MCF 10A (cell line): ENCODE measurements at regions of chr4 and their contacts with region 1.

Region 1: GRCh38 chr4:152500800-152501434 is 35.0 kb downstream of the FBXW7 start:
- DNase-seq: peak; percentile 83
- H3K4me3 Mint-ChIP-seq: no peak overlapping the region
- H3K27ac Mint-ChIP-seq: no peak overlapping the region
- H3K4me1 Mint-ChIP-seq: peaks cover 12% of the 10 kb centered on the region
- H3K27me3 Mint-ChIP-seq: no peaks in the 10 kb centered on the region
- CTCF ChIP-seq: peak; percentile 66

Region 2: DNA sequence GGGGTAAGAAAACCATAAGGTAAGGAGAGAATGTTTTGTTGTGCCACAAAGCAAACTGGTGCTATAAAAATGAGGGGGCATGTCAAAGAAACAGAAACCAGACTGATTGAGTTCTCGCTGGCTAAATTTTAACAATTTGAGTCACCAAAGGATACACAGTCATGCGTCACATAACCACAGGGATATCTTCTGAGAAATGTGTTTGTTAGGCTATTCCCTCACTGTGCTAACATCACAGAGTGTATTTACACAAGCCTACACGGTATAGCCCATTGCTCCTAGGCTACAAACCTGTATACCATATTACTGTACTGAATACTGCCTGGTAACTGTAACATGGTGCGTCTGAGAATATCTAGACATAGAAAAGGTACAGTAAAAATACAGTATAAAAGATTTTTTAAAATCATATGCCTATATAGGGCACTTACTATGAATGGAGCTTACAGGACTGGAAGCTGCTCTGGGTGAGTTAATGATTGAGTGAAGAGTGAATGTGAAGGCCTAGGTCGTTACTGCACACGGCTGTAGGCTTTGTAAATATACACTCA is 15.1 kb before region 1 on chr4:
- CTCF ChIA-PET with region 1: interaction called, 16 read pairs
- POLR2A ChIA-PET with region 1: interaction called, 4 read pairs
- intact Hi-C with region 1: no loop called
- DNase-seq: peak; percentile 78
- H3K4me3 Mint-ChIP-seq: peak overlapping the region; percentile 54
- H3K27ac Mint-ChIP-seq: peak overlapping the region; percentile 74
- H3K4me1 Mint-ChIP-seq: peaks cover 18% of the 10 kb centered on the region
- H3K27me3 Mint-ChIP-seq: no peaks in the 10 kb centered on the region
- CTCF ChIP-seq: no peak

Region 3: GRCh38 chr4:152535903-152536544 is 35.1 kb after region 1 on chr4 and contains the start of gene FBXW7:
- CTCF ChIA-PET with region 1: interaction called, 22 read pairs
- POLR2A ChIA-PET with region 1: interaction called, 69 read pairs
- intact Hi-C with region 1: loop called (anchors 1 kb)
- DNase-seq: peak; percentile 99
- H3K4me3 Mint-ChIP-seq: peak within 1 kb of the TSS; percentile 92
- H3K27ac Mint-ChIP-seq: peak within 1 kb of the TSS; percentile 95
- H3K4me1 Mint-ChIP-seq: peaks cover 49% of the 10 kb centered on the region
- H3K27me3 Mint-ChIP-seq: no peaks in the 10 kb centered on the region
- CTCF ChIP-seq: no peak
- total RNA-seq, gene FBXW7: 35.8 and 40.2 TPM in 2 replicates

Region 4: GRCh38 chr4:152634110-152634760 is 133.3 kb after region 1 on chr4:
- CTCF ChIA-PET with region 1: interaction called, 131 read pairs
- POLR2A ChIA-PET with region 1: interaction called, 15 read pairs
- intact Hi-C with region 1: no loop called
- DNase-seq: peak; percentile 51
- H3K4me3 Mint-ChIP-seq: no peak overlapping the region
- H3K27ac Mint-ChIP-seq: peak overlapping the region; percentile 74
- H3K4me1 Mint-ChIP-seq: no peaks in the 10 kb centered on the region
- H3K27me3 Mint-ChIP-seq: no peaks in the 10 kb centered on the region
- CTCF ChIP-seq: no peak

Region 5: DNA sequence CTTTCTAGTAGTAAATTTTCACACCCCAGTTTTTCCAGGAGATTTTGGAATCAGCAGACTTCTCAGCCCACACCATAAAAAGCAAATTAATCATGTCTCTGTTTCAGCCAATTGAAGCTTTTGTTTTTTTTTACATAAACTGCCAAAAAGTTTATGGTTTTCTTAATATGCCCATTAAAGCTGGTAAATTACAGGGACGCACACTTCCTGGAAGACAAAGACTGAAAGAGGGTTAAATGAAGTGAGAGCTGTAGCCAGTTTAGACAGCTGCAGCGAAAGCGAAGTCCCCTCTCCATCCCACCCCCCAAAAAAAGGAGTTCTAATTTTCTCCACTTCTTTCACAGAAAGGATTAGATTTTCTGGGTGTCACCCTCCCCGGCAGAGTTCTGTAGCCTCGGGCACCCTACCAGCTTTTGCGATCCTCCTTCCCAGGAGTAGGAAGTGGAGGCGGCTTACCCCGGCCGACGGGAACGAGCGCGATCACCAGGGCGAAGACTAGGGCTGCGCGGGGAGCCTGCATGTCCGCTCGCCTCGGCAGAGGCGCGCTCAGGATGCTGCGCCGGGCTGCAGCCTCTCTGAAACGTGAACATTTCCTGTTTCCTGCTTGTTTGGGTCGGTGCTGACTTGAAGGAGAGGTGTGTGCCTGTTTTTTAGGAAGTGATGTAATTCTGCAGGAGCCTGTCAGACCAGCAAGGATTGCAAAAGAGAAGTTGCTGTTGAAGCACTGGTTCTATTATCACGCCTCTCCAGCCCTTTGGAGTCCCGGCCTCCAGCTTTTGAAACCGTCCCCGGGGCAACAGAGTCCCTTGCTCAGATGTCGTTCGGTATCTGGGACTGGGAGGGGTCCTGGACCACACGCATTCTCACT is 178.7 kb after region 1 on chr4 and contains the start of gene TMEM154:
- CTCF ChIA-PET with region 1: interaction called, 15 read pairs
- POLR2A ChIA-PET with region 1: interaction called, 5 read pairs
- intact Hi-C with region 1: no loop called
- DNase-seq: peak; percentile 93
- H3K4me3 Mint-ChIP-seq: peak within 1 kb of the TSS; percentile 94
- H3K27ac Mint-ChIP-seq: peak within 1 kb of the TSS; percentile 91
- H3K4me1 Mint-ChIP-seq: peaks cover 22% of the 10 kb centered on the region
- H3K27me3 Mint-ChIP-seq: no peaks in the 10 kb centered on the region
- CTCF ChIP-seq: no peak
- total RNA-seq, gene TMEM154: 37.9 and 41.5 TPM in 2 replicates

Region 6: GRCh38 chr4:153564630-153565525 is 1064.0 kb after region 1 on chr4:
- CTCF ChIA-PET with region 1: no interaction called
- POLR2A ChIA-PET with region 1: no interaction called
- intact Hi-C with region 1: no loop called
- DNase-seq: peak; percentile 13
- H3K4me3 Mint-ChIP-seq: no peak overlapping the region
- H3K27ac Mint-ChIP-seq: no peak overlapping the region
- H3K4me1 Mint-ChIP-seq: peaks cover 7% of the 10 kb centered on the region
- H3K27me3 Mint-ChIP-seq: no peaks in the 10 kb centered on the region
- CTCF ChIP-seq: no peak